HCT116 (cell line): ENCODE measurements at regions of chr13 and their contacts with region 1.

Region 1: DNA sequence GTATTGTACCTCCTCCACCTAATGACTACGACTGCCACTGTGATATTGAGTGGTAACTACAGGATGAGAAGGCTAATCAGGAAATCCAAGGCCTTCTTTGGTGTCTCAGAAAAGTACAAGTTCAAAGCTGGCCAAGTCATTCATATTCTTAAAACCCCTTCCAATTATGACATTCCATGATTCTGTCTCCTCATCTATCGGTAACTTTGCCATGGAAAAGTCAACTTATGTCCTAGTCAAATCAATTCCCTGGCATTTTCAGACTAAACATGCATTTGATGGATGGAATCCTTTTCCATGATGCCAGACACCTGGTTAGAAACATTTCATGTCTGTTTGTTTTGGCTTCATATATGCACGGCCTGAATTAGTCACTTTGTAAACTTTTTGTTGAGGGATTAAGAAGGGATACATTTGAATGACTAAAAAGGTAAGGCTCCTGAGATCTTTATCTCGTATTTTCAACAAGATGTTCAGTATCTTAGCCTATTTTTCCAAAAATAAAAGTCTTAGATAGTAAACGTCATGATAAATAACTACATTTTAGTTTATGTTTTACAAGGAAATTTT is 186.5 kb downstream of the NHLRC3 start:
- DNase-seq: no peak
- ATAC-seq: no peak
- H3K4me3 ChIP-seq: no peak overlapping the region
- H3K27ac ChIP-seq: no peak overlapping the region
- H3K4me1 ChIP-seq: no peaks in the 10 kb centered on the region
- H3K27me3 ChIP-seq: peaks cover 32% of the 10 kb centered on the region
- CTCF ChIP-seq: no peak
- POLR2A ChIP-seq: no peak
- RAD21 ChIP-seq: no peak

Region 2: DNA sequence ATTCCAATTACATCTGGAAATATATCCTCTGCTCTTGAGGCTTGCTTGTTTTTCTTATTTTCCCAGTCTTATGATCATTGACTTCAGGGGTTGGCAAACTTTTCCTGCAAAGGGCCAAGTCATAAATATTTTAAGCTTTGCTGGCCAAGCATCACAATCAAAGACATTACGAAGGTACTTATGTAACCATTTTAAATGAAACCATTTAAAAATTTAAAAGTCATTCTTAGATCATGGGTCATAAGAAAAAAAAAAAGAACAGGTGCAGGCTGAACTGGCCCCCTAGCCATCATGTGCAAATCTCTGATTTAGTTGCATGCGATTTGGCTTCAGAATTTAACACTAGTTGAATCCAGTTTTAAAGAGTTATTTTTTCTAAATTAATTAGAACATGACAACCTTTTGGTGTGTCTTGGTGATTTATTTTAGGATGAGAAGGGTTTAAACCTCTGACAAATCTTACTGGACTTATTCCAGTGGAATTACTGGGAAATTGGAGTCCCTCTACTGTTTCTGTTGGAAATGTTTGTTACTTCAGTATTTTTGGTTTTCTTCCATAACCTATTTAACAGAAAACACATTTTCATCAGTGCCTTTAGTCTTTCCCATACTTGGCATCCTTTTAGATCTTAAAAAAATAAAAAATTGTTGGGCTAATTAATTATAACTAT is 38.4 kb before region 1 on chr13:
- CTCF ChIA-PET with region 1: no interaction called
- POLR2A ChIA-PET with region 1: no interaction called
- RAD21 ChIA-PET with region 1: no interaction called
- intact Hi-C with region 1: loop called (anchors 5 kb)
- DNase-seq: no peak
- ATAC-seq: no peak
- H3K4me3 ChIP-seq: no peak overlapping the region
- H3K27ac ChIP-seq: no peak overlapping the region
- H3K4me1 ChIP-seq: no peaks in the 10 kb centered on the region
- H3K27me3 ChIP-seq: peaks cover 26% of the 10 kb centered on the region
- CTCF ChIP-seq: no peak
- POLR2A ChIP-seq: no peak
- RAD21 ChIP-seq: no peak

Region 3: GRCh38 chr13:39401046-39401705 is 176.4 kb after region 1 on chr13:
- CTCF ChIA-PET with region 1: no interaction called
- POLR2A ChIA-PET with region 1: no interaction called
- RAD21 ChIA-PET with region 1: no interaction called
- intact Hi-C with region 1: no loop called
- DNase-seq: no peak
- ATAC-seq: no peak
- H3K4me3 ChIP-seq: no peak overlapping the region
- H3K27ac ChIP-seq: no peak overlapping the region
- H3K4me1 ChIP-seq: no peaks in the 10 kb centered on the region
- H3K27me3 ChIP-seq: peaks cover 37% of the 10 kb centered on the region; the same call in 1 of the 2 replicates
- CTCF ChIP-seq: no peak
- POLR2A ChIP-seq: no peak
- RAD21 ChIP-seq: no peak

Region 4: DNA sequence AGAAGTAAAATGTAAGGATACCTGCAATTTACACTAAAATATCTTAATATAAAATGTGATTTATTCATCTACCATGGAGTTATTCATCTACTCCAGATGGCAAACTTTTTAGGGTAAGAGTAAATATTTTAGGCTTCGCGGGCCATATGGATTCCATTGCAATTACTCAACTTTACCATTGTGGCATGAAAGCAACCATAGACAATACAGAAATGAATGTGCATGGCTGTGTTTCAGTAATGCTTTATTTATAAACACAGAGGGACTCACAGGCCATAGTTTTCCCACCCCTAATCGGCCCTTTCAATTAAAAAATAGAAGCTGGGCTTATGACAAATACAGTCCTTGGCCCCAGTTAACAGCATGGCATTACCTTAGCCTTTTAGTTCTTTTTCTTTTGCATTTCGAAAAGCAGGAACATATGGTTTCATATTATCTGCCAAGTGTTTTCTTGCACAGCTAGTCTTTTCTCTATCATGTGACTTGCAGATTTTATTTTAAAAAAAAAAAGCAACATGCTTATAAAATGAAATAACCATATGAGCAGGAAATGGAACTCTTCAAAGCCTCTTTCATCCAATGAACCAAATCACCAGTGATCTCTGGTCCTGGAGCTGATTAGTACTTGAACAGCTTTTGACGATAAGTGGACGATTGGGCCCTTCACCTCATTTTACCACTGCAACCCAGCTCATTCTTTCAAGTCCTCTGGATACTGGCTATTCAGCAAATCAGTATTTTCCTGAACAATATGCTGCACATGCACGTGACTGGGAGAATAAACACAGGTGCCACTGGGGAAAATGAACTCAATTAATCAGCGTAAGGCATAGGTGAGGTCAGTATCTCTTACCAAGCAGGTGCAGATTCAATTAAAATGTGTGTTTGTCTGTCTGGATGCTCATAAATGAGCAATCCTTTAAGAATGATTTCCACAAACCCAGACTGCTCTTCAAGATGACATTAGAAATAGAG is 314.3 kb after region 1 on chr13:
- CTCF ChIA-PET with region 1: no interaction called
- POLR2A ChIA-PET with region 1: no interaction called
- RAD21 ChIA-PET with region 1: no interaction called
- intact Hi-C with region 1: no loop called
- DNase-seq: no peak
- ATAC-seq: no peak
- H3K4me3 ChIP-seq: no peak overlapping the region
- H3K27ac ChIP-seq: no peak overlapping the region
- H3K4me1 ChIP-seq: no peaks in the 10 kb centered on the region
- H3K27me3 ChIP-seq: peaks cover 8% of the 10 kb centered on the region; the same call in 1 of the 2 replicates
- CTCF ChIP-seq: no peak
- POLR2A ChIP-seq: no peak
- RAD21 ChIP-seq: no peak

Region 5: GRCh38 chr13:39676315-39676876 is 451.6 kb after region 1 on chr13:
- CTCF ChIA-PET with region 1: no interaction called
- POLR2A ChIA-PET with region 1: no interaction called
- RAD21 ChIA-PET with region 1: no interaction called
- intact Hi-C with region 1: no loop called
- DNase-seq: peak; percentile 40
- ATAC-seq: peak; percentile 49; the same call in 1 of the 2 replicates
- H3K4me3 ChIP-seq: no peak overlapping the region
- H3K27ac ChIP-seq: no peak overlapping the region
- H3K4me1 ChIP-seq: no peaks in the 10 kb centered on the region
- H3K27me3 ChIP-seq: no peaks in the 10 kb centered on the region
- CTCF ChIP-seq: peak; percentile 21 to 48 (median 28); a peak in 3 of 6 replicates
- POLR2A ChIP-seq: no peak
- RAD21 ChIP-seq: peak; percentile 42